Activated naive CD4-positive, alpha-beta T cell treated with anti-CD3 and anti-CD28 coated beads for 36 hours (primary cell): ENCODE measurements at regions of chr2 and their contacts with region 1.

Region 1: DNA sequence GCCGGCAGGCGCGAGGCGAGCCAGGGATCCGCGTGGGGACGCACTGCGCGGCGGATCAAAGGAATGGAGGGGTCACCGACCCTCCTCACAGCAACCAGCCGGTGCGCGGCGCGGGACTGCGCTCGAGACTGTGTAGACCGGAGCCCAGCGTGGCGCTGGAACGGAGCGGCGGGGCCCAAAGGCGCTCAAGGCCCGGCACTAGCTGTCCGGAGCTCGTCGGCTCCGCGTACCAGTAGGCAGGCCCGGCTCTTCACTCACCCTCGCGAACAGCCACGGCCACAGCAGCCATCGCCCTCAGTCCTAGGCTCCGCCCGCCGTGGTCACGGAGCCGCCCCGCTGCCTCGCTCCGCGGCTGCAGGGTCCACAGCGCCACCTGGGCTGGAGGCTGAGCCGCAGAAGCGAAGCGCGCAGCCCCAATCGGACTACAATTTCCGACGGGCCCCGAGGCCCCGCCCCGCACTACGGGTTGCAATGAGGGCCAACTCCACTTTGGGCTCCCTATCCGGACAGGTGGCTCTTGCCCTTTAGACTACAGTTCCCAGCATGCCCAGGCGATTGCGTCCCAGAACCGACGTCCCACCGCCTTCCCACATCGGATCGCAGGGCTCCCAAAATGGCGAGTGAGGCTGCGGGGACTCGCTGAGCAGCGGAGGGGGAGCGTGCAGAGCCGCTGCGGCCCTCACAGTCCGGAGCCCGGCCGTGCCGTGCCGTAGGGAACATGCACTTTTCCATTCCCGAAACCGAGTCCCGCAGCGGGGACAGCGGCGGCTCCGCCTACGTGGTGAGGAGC is at the starts of genes EIF2B4 and SNX17:
- DNase-seq: peak; percentile 100
- H3K4me3 Mint-ChIP-seq: peak within 1 kb of the TSS; percentile 83
- H3K27ac Mint-ChIP-seq: peak within 1 kb of the TSS; percentile 95
- H3K4me1 Mint-ChIP-seq: peaks cover 30% of the 10 kb centered on the region
- H3K27me3 Mint-ChIP-seq: no peaks in the 10 kb centered on the region
- total RNA-seq, gene EIF2B4: 24.4 to 25.2 TPM
- total RNA-seq, gene SNX17: 68.5 to 75.5 TPM

Region 2: DNA sequence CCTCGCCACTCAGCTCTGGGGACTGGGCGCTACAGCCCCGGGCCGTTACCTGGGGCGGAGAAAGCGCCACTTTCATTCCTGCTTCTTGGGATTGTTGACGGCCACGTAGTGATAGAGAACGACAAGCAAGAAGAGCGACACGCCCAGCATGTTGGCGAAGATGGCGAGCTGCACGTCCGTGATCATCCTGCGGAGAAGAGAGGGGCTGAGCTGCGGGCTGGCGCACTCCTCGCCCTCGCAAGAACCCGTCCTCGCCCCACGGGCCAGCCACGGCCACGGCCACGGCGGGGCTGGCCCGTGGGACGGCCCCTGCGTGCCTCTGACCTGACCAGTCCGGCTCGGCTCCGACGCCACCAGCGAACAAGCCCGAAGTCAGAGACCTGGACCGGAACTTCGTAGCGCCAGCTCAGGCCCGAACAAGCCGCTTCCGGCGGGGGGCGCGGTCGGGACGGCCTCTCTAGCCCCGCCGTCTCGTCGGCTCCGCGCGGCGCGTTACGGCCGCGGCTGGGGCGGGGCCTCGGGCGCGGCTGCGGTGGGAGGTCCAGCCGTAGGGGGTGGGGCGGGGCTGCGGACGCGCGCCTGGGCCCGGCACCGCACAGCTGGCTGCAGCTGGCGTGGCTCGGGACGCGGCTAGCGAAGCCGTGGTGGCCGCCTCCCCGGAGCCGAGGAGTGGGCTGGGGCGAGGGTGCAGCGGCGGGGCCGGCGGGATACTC is 298.8 kb before region 1 on chr2 and contains the start of gene OST4:
- CTCF ChIA-PET with region 1: no interaction called
- intact Hi-C with region 1: loop called (anchors 5 kb)
- DNase-seq: peak; percentile 88
- H3K4me3 Mint-ChIP-seq: peak within 1 kb of the TSS; percentile 97
- H3K27ac Mint-ChIP-seq: peak within 1 kb of the TSS; percentile 91
- H3K4me1 Mint-ChIP-seq: peaks cover 76% of the 10 kb centered on the region
- H3K27me3 Mint-ChIP-seq: no peaks in the 10 kb centered on the region
- total RNA-seq, gene OST4: 257 to 282 TPM

Region 3: GRCh38 chr2:27217217-27218121 is 152.8 kb before region 1 on chr2 and contains the start of gene CAD:
- CTCF ChIA-PET with region 1: no interaction called
- intact Hi-C with region 1: loop called (anchors 1 kb)
- DNase-seq: peak; percentile 89
- H3K4me3 Mint-ChIP-seq: peak within 1 kb of the TSS; percentile 97
- H3K27ac Mint-ChIP-seq: peak within 1 kb of the TSS; percentile 86
- H3K4me1 Mint-ChIP-seq: peaks cover 43% of the 10 kb centered on the region
- H3K27me3 Mint-ChIP-seq: no peaks in the 10 kb centered on the region
- total RNA-seq, gene CAD: 109 to 112 TPM

Region 4: GRCh38 chr2:27380626-27381545 is 10.7 kb after region 1 on chr2 and contains the start of gene ZNF513:
- CTCF ChIA-PET with region 1: interaction called, 5 read pairs
- intact Hi-C with region 1: loop called (anchors 1 kb)
- DNase-seq: peak; percentile 93
- H3K4me3 Mint-ChIP-seq: peak within 1 kb of the TSS; percentile 79
- H3K27ac Mint-ChIP-seq: peak within 1 kb of the TSS; percentile 86
- H3K4me1 Mint-ChIP-seq: peaks cover 30% of the 10 kb centered on the region
- H3K27me3 Mint-ChIP-seq: no peaks in the 10 kb centered on the region
- total RNA-seq, gene ZNF513: 4.9 to 5.2 TPM

Region 5: DNA sequence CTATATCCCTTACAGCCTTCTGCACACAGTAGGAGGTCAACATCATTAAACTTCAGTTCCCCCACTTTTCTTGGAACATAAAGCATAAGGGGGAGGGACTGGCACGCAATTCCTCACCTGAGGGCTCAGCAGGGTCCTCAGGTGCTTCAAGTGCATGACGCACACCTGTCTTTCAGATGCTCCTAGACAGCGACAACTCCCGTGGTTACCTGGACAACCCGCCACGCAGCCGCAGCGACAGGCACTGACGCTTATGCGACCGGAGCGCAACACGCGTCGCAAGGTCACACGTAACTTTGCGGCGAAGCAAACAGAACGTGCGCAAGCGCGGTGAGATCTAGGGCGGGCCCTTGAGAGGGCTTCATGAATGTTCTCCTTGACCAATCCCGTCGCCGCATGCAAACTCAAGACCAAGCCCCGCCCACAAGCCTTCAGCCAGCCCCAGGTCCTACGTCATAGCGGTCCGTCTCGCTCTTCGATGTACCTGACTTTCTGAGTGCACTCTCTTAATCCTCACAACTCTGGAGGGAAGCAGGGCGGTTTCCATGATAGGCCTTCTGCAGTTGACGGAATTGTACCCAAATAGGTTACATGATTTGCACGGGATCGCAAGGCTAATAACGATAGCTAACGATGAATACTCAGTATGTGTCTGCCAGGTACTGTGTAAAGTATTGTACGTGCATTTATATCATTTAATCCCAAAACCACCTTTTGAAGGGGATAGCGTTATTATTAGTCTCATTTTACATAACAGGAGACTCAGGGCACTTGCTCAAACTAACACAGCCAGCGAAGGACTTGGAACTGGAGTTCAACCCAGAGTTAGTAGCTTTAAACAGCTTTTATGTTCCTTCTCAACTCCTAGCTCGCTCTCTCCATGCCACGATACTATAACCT is 119.5 kb after region 1 on chr2 and contains the start of gene IFT172:
- CTCF ChIA-PET with region 1: no interaction called
- intact Hi-C with region 1: loop called (anchors 1 kb)
- DNase-seq: peak; percentile 100
- H3K4me3 Mint-ChIP-seq: peak within 1 kb of the TSS; percentile 87
- H3K27ac Mint-ChIP-seq: peak within 1 kb of the TSS; percentile 66
- H3K4me1 Mint-ChIP-seq: peaks cover 20% of the 10 kb centered on the region
- H3K27me3 Mint-ChIP-seq: peaks cover 10% of the 10 kb centered on the region
- total RNA-seq, gene IFT172: 9.2 to 12.7 TPM

Region 6: GRCh38 chr2:27663463-27664249 is 293.4 kb after region 1 on chr2 and contains the starts of genes SLC4A1AP and SUPT7L:
- CTCF ChIA-PET with region 1: no interaction called
- intact Hi-C with region 1: loop called (anchors 1 kb)
- DNase-seq: peak; percentile 76
- H3K4me3 Mint-ChIP-seq: peak within 1 kb of the TSS; percentile 98
- H3K27ac Mint-ChIP-seq: peak within 1 kb of the TSS; percentile 99
- H3K4me1 Mint-ChIP-seq: peaks cover 47% of the 10 kb centered on the region
- H3K27me3 Mint-ChIP-seq: no peaks in the 10 kb centered on the region
- total RNA-seq, gene SLC4A1AP: 21.2 to 22.2 TPM
- total RNA-seq, gene SUPT7L: 27.8 to 29.7 TPM

Region 7: DNA sequence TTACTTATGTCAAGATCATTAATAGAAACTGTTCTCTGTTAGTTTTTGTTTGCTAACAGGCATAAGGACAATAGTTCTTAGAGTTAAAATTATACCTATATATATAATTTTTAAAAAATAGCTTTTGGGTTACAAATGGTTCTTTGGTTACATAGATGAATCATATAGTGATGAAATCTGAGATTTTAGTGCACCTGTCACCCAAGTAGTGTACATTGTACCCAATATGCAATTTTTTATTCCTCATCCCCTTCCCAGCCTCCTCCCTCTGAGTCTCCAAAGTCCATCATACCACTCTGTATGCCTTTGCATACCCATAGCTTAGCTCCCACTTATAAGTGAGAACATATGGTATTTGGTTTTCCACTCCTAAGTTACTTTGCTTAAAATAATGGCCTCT is 319.8 kb after region 1 on chr2:
- CTCF ChIA-PET with region 1: no interaction called
- intact Hi-C with region 1: no loop called
- DNase-seq: no peak
- H3K4me3 Mint-ChIP-seq: no peak overlapping the region
- H3K27ac Mint-ChIP-seq: no peak overlapping the region
- H3K4me1 Mint-ChIP-seq: no peaks in the 10 kb centered on the region
- H3K27me3 Mint-ChIP-seq: no peaks in the 10 kb centered on the region

Region 8: DNA sequence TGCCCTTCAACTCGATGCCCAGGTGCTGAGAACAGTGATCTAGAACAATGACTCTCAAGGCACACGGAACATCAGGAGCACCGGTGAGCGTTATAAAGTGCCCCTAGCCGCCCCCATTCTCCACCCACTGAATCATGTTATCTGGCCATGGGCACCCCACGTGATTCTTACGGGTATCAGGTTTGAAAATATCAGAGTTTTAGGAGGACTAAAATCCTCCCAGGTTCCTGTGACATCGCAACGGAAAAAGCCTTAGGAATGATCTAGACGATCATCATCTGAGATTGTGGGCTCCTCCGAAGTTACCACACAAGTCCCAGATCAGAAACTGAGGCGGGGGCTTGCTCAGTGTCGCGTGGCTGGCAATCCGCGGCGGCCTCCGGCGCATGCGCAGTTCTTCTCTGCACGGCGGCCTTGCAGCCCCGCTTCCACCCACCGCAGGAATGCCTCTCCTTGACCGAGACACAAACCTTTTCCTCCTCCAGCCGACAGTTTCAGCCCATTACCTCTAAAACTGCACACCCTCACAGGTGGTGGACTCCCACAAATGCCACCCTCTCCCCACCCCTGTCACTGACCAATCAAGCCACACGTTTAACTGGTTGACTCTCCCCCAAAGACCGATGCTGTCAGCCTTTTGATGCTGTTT is 395.5 kb after region 1 on chr2:
- CTCF ChIA-PET with region 1: no interaction called
- intact Hi-C with region 1: no loop called
- DNase-seq: peak; percentile 45
- H3K4me3 Mint-ChIP-seq: peak overlapping the region; percentile 36
- H3K27ac Mint-ChIP-seq: no peak overlapping the region
- H3K4me1 Mint-ChIP-seq: peaks cover 8% of the 10 kb centered on the region
- H3K27me3 Mint-ChIP-seq: no peaks in the 10 kb centered on the region